ENCODE measurements at regions of chr6 and their contacts with region 1.

Region 1: GRCh38 chr6:83127976-83128375 is 60.5 kb downstream of the DOP1A start:
- DNase-seq: no peak
- H3K4me3 ChIP-seq: no peak overlapping the region
- H3K27ac ChIP-seq: no peak overlapping the region
- H3K4me1 ChIP-seq: no peaks in the 10 kb centered on the region
- H3K27me3 ChIP-seq: no peaks in the 10 kb centered on the region
- CTCF ChIP-seq: no peak
- POLR2A ChIP-seq: no peak

Region 2: DNA sequence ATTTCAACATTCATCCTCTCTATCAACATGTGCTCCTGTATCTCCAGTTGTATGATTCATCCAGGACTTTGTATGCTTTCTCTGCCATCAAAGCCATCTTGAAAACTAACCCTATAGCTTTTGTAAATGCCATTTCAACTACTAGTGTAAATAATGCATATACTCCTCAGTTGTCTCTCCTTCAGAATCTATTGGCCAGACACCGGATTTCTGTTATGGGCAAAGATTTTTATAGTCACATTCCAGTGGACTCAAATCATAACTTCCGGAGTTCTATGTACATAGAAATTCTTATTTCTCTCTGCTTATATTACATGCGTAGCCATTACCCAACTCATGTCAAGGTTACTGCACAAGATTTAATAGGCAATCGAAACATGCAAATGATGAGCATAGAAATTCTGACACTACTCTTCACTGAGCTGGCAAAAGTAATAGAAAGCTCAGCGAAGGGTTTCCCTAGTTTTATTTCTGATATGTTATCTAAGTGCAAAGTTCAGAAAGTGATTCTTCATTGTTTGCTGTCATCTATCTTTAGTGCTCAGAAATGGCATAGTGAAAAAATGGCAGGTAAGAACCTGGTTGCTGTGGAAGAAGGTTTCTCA is 10.2 kb after region 1 on chr6:
- CTCF ChIA-PET with region 1: no interaction called
- POLR2A ChIA-PET with region 1: no interaction called
- dilution Hi-C with region 1: no loop called
- intact Hi-C with region 1: loop called (anchors 2 kb)
- DNase-seq: no peak
- H3K4me3 ChIP-seq: no peak overlapping the region
- H3K27ac ChIP-seq: no peak overlapping the region
- H3K4me1 ChIP-seq: no peaks in the 10 kb centered on the region
- H3K27me3 ChIP-seq: no peaks in the 10 kb centered on the region
- CTCF ChIP-seq: no peak
- POLR2A ChIP-seq: no peak

Measured in endothelial cell of umbilical vein (primary cell).